ENCODE measurements at regions of chr15 and their contacts with region 1.

Region 1: GRCh38 chr15:33086507-33087121 is 107.9 kb downstream of the FMN1 start:
- DNase-seq: peak in 5 of 9 donors; percentile 9 to 70 (median 48)
- ATAC-seq: peak; percentile 87
- H3K4me3 ChIP-seq: no peak overlapping the region
- H3K4me3 Mint-ChIP-seq: peak overlapping the region in 4 of 10 donors; percentile 27 to 77 (median 55)
- H3K27ac ChIP-seq: no peak overlapping the region
- H3K27ac Mint-ChIP-seq: peak overlapping the region in 2 of 9 donors; percentile 24 to 87
- H3K4me1 ChIP-seq: no peaks in the 10 kb centered on the region
- H3K4me1 Mint-ChIP-seq: peaks cover 0 to 39% (median 11%) of the 10 kb centered on the region in 7 donors
- H3K27me3 ChIP-seq: no peaks in the 10 kb centered on the region
- H3K27me3 Mint-ChIP-seq: peaks cover 0 to 9% (median 0%) of the 10 kb centered on the region in 5 donors

Region 2: GRCh38 chr15:32659340-32660155 is 427.1 kb before region 1 on chr15:
- CTCF ChIA-PET with region 1: no interaction called
- POLR2A ChIA-PET with region 1: no interaction called
- intact Hi-C with region 1: loop called in 1 of 2 experiments (anchors 5 kb)
- DNase-seq: no peak
- ATAC-seq: no peak
- H3K4me3 ChIP-seq: no peak overlapping the region
- H3K4me3 Mint-ChIP-seq: no peak overlapping the region
- H3K27ac ChIP-seq: no peak overlapping the region
- H3K27ac Mint-ChIP-seq: no peak overlapping the region
- H3K4me1 ChIP-seq: peaks cover 0 to 6% of the 10 kb centered on the region in 2 donors
- H3K4me1 Mint-ChIP-seq: peaks cover 4 to 24% (median 13%) of the 10 kb centered on the region in 7 donors
- H3K27me3 ChIP-seq: no peaks in the 10 kb centered on the region
- H3K27me3 Mint-ChIP-seq: no peaks in the 10 kb centered on the region

Region 3: GRCh38 chr15:32908135-32908801 is 178.3 kb before region 1 on chr15:
- CTCF ChIA-PET with region 1: no interaction called
- POLR2A ChIA-PET with region 1: no interaction called
- intact Hi-C with region 1: no loop called
- DNase-seq: no peak
- ATAC-seq: peak; percentile 73
- H3K4me3 ChIP-seq: no peak overlapping the region
- H3K4me3 Mint-ChIP-seq: no peak overlapping the region
- H3K27ac ChIP-seq: no peak overlapping the region
- H3K27ac Mint-ChIP-seq: no peak overlapping the region
- H3K4me1 ChIP-seq: no peaks in the 10 kb centered on the region
- H3K4me1 Mint-ChIP-seq: peaks cover 0 to 4% (median 0%) of the 10 kb centered on the region in 7 donors
- H3K27me3 ChIP-seq: no peaks in the 10 kb centered on the region
- H3K27me3 Mint-ChIP-seq: peaks cover 0 to 12% (median 0%) of the 10 kb centered on the region in 5 donors

Region 4: GRCh38 chr15:33132722-33133345 is 46.2 kb after region 1 on chr15:
- CTCF ChIA-PET with region 1: interaction called, 12 read pairs
- POLR2A ChIA-PET with region 1: no interaction called
- intact Hi-C with region 1: loop called (anchors 1 kb)
- DNase-seq: peak in 3 of 9 donors; percentile 6 to 27 (median 13)
- ATAC-seq: peak; percentile 62
- H3K4me3 ChIP-seq: no peak overlapping the region
- H3K4me3 Mint-ChIP-seq: peak overlapping the region in 4 of 10 donors; percentile 31 to 66 (median 62)
- H3K27ac ChIP-seq: no peak overlapping the region
- H3K27ac Mint-ChIP-seq: peak overlapping the region in 2 of 9 donors; percentile 39 to 74
- H3K4me1 ChIP-seq: no peaks in the 10 kb centered on the region
- H3K4me1 Mint-ChIP-seq: peaks cover 0 to 24% (median 13%) of the 10 kb centered on the region in 7 donors
- H3K27me3 ChIP-seq: no peaks in the 10 kb centered on the region
- H3K27me3 Mint-ChIP-seq: peaks cover 0 to 7% (median 0%) of the 10 kb centered on the region in 5 donors

Region 5: GRCh38 chr15:33226559-33227181 is 140.1 kb after region 1 on chr15:
- CTCF ChIA-PET with region 1: no interaction called
- POLR2A ChIA-PET with region 1: no interaction called
- intact Hi-C with region 1: loop called (anchors 1 to 5 kb)
- DNase-seq: peak in 7 of 9 donors; percentile 4 to 84 (median 78)
- ATAC-seq: peak; percentile 99
- H3K4me3 ChIP-seq: no peak overlapping the region
- H3K4me3 Mint-ChIP-seq: peak overlapping the region in 4 of 10 donors; percentile 11 to 62 (median 53)
- H3K27ac ChIP-seq: no peak overlapping the region
- H3K27ac Mint-ChIP-seq: peak overlapping the region in 5 of 9 donors; percentile 61 to 76 (median 74)
- H3K4me1 ChIP-seq: peaks cover 7 to 16% of the 10 kb centered on the region in 2 donors
- H3K4me1 Mint-ChIP-seq: peaks cover 0 to 27% (median 19%) of the 10 kb centered on the region in 7 donors
- H3K27me3 ChIP-seq: no peaks in the 10 kb centered on the region
- H3K27me3 Mint-ChIP-seq: peaks cover 0 to 14% (median 0%) of the 10 kb centered on the region in 5 donors

Region 6: GRCh38 chr15:33234014-33234461 is 147.4 kb after region 1 on chr15:
- CTCF ChIA-PET with region 1: no interaction called
- POLR2A ChIA-PET with region 1: no interaction called
- intact Hi-C with region 1: loop called in 1 of 2 experiments (anchors 5 kb)
- DNase-seq: peak in 3 of 9 donors; percentile 10 to 24 (median 11)
- ATAC-seq: no peak
- H3K4me3 ChIP-seq: no peak overlapping the region
- H3K4me3 Mint-ChIP-seq: no peak overlapping the region
- H3K27ac ChIP-seq: no peak overlapping the region
- H3K27ac Mint-ChIP-seq: no peak overlapping the region
- H3K4me1 ChIP-seq: no peaks in the 10 kb centered on the region
- H3K4me1 Mint-ChIP-seq: no peaks in the 10 kb centered on the region
- H3K27me3 ChIP-seq: no peaks in the 10 kb centered on the region
- H3K27me3 Mint-ChIP-seq: peaks cover 0 to 24% (median 15%) of the 10 kb centered on the region in 5 donors

Region 7: GRCh38 chr15:33292717-33293307 is 206.2 kb after region 1 on chr15:
- CTCF ChIA-PET with region 1: no interaction called
- POLR2A ChIA-PET with region 1: no interaction called
- intact Hi-C with region 1: loop called in 1 of 2 experiments (anchors 1 kb)
- DNase-seq: peak in 5 of 9 donors; percentile 18 to 53 (median 35)
- ATAC-seq: peak; percentile 46
- H3K4me3 ChIP-seq: no peak overlapping the region
- H3K4me3 Mint-ChIP-seq: no peak overlapping the region
- H3K27ac ChIP-seq: no peak overlapping the region
- H3K27ac Mint-ChIP-seq: no peak overlapping the region
- H3K4me1 ChIP-seq: no peaks in the 10 kb centered on the region
- H3K4me1 Mint-ChIP-seq: no peaks in the 10 kb centered on the region
- H3K27me3 ChIP-seq: no peaks in the 10 kb centered on the region
- H3K27me3 Mint-ChIP-seq: peaks cover 0 to 10% (median under 1%) of the 10 kb centered on the region in 5 donors

Region 8: GRCh38 chr15:33700695-33701304 is 614.2 kb after region 1 on chr15:
- CTCF ChIA-PET with region 1: interaction called, 10 read pairs
- POLR2A ChIA-PET with region 1: no interaction called
- intact Hi-C with region 1: no loop called
- DNase-seq: peak in 8 of 9 donors; percentile 16 to 63 (median 48)
- ATAC-seq: peak; percentile 83
- H3K4me3 ChIP-seq: no peak overlapping the region
- H3K4me3 Mint-ChIP-seq: no peak overlapping the region
- H3K27ac ChIP-seq: no peak overlapping the region
- H3K27ac Mint-ChIP-seq: no peak overlapping the region
- H3K4me1 ChIP-seq: no peaks in the 10 kb centered on the region
- H3K4me1 Mint-ChIP-seq: peaks cover 0 to 2% (median 0%) of the 10 kb centered on the region in 7 donors
- H3K27me3 ChIP-seq: no peaks in the 10 kb centered on the region
- H3K27me3 Mint-ChIP-seq: peaks cover 0 to 6% (median 4%) of the 10 kb centered on the region in 5 donors